ENCODE measurements at regions of chr17 and their contacts with region 1.

Region 1: GRCh38 chr17:63773381-63774140 is at the start of gene CCDC47:
- DNase-seq: peak; percentile 99

Region 2: GRCh38 chr17:63697341-63698286 is 75.9 kb before region 1 on chr17:
- CTCF ChIA-PET with region 1: no interaction called
- POLR2A ChIA-PET with region 1: interaction called, 17 read pairs
- DNase-seq: peak; percentile 68

Region 3: GRCh38 chr17:63751806-63752205 is 21.8 kb before region 1 on chr17:
- CTCF ChIA-PET with region 1: no interaction called
- POLR2A ChIA-PET with region 1: interaction called, 14 read pairs
- DNase-seq: no peak

Region 4: GRCh38 chr17:63785556-63785955 is 12.0 kb after region 1 on chr17:
- CTCF ChIA-PET with region 1: interaction called, 9 read pairs
- POLR2A ChIA-PET with region 1: interaction called, 47 read pairs
- DNase-seq: no peak

Region 5: DNA sequence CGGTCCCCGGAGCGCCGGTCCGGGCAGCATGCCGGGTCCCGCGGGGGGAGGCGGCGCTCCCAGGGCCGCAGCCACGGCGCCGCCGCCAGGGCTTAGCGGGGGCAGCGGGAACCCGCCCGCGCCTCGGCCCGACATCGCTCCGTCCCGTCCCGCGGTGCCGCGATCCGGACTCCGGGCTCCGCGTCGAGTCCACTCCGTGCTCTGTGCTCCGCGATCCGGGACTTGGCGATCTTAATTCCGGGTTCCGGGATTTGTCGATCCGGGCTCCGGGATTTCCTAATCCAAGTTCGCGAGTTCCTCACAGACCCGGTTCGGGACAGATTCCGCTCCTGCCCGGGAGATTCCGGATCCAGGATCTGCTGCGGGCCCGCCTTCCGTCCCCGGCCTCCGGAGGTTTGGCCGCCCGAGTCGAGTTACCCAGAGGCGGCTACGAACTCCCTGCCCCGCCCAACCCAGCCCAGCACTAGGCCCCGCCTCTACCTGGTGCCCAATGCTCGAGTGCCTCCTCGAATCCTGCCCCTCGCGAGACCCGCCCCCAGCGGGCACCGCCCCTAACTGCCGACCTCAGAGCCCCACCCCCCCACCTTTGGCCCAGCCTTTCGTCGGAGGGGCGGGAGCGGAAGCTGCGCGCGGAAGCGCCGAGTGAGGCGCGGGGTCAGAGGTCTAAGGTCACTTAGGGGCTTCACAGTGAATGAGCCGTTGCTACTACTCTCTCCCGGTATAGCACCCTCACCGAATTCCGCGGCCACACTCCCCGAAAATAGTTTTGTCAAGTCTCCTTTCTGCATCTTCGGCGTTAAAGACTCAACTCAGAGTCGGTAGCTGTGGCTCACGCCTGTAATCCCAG is 69.2 kb after region 1 on chr17 and contains the start of gene SMARCD2:
- CTCF ChIA-PET with region 1: no interaction called
- POLR2A ChIA-PET with region 1: interaction called, 32 read pairs
- DNase-seq: peak; percentile 99

Measured in HEK293T (cell line).